HEK293T (cell line): ENCODE measurements at regions of chr6 and their contacts with region 1.

Region 1: GRCh38 chr6:33620856-33621710 is at the start of gene ITPR3:
- DNase-seq: peak; percentile 54

Region 2: GRCh38 chr6:33633462-33634158 is 12.5 kb after region 1 on chr6:
- CTCF ChIA-PET with region 1: interaction called, 16 read pairs
- POLR2A ChIA-PET with region 1: interaction called, 4 read pairs
- DNase-seq: peak; percentile 77

Region 3: GRCh38 chr6:33717934-33718455 is 96.9 kb after region 1 on chr6:
- CTCF ChIA-PET with region 1: no interaction called
- POLR2A ChIA-PET with region 1: no interaction called
- DNase-seq: no peak